OCI-LY7 (cell line): ENCODE measurements at regions of chr1 and their contacts with region 1.

Region 1: GRCh38 chr1:51044834-51045233 is 57.2 kb upstream of the C1orf185 start:
- DNase-seq: peak; percentile 49
- H3K4me3 ChIP-seq: no peak overlapping the region
- H3K27ac ChIP-seq: no peak overlapping the region
- H3K4me1 ChIP-seq: no peaks in the 10 kb centered on the region
- CTCF ChIP-seq: peak; percentile 83

Region 2: GRCh38 chr1:50774759-50775351 is 270.0 kb before region 1 on chr1:
- CTCF ChIA-PET with region 1: no interaction called
- POLR2A ChIA-PET with region 1: no interaction called
- intact Hi-C with region 1: loop called (anchors 2 kb)
- DNase-seq: peak; percentile 61
- H3K4me3 ChIP-seq: no peak overlapping the region
- H3K27ac ChIP-seq: no peak overlapping the region
- H3K4me1 ChIP-seq: no peaks in the 10 kb centered on the region
- CTCF ChIP-seq: peak; percentile 92

Region 3: GRCh38 chr1:50873458-50874187 is 171.2 kb before region 1 on chr1:
- CTCF ChIA-PET with region 1: no interaction called
- POLR2A ChIA-PET with region 1: no interaction called
- intact Hi-C with region 1: loop called (anchors 1 kb)
- DNase-seq: peak; percentile 83
- H3K4me3 ChIP-seq: peak overlapping the region; percentile 48
- H3K27ac ChIP-seq: peak overlapping the region; percentile 8
- H3K4me1 ChIP-seq: peaks cover 14% of the 10 kb centered on the region
- CTCF ChIP-seq: peak; percentile 100

Region 4: GRCh38 chr1:50929376-50929958 is 115.4 kb before region 1 on chr1:
- CTCF ChIA-PET with region 1: no interaction called
- POLR2A ChIA-PET with region 1: no interaction called
- intact Hi-C with region 1: loop called (anchors 5 kb)
- DNase-seq: peak; percentile 47
- H3K4me3 ChIP-seq: no peak overlapping the region
- H3K27ac ChIP-seq: no peak overlapping the region
- H3K4me1 ChIP-seq: peaks cover 6% of the 10 kb centered on the region
- CTCF ChIP-seq: peak; percentile 90

Region 5: DNA sequence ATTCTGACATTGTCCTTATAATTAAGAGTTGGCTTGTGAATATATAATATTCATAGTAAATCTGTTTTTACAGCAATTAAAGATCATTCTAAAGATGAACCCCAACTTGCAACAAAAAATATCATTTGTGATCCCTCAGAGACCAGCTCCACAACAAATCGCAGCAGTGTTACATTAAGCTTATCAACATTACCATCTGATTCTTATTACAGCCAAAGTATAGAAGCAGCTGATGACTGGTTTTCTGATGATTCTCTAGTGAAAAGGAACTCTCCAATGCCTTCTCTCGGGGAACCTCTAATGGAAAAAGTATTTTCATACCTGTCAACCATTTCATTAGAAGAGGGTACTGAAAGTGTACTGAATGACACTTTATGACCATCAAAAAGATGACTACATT is 102.6 kb after region 1 on chr1:
- CTCF ChIA-PET with region 1: no interaction called
- POLR2A ChIA-PET with region 1: no interaction called
- intact Hi-C with region 1: no loop called
- DNase-seq: no peak
- H3K4me3 ChIP-seq: no peak overlapping the region
- H3K27ac ChIP-seq: no peak overlapping the region
- H3K4me1 ChIP-seq: no peaks in the 10 kb centered on the region
- CTCF ChIP-seq: no peak